CD4-positive, alpha-beta memory T cell (primary cell): ENCODE measurements at regions of chr15 and their contacts with region 1.

Region 1: DNA sequence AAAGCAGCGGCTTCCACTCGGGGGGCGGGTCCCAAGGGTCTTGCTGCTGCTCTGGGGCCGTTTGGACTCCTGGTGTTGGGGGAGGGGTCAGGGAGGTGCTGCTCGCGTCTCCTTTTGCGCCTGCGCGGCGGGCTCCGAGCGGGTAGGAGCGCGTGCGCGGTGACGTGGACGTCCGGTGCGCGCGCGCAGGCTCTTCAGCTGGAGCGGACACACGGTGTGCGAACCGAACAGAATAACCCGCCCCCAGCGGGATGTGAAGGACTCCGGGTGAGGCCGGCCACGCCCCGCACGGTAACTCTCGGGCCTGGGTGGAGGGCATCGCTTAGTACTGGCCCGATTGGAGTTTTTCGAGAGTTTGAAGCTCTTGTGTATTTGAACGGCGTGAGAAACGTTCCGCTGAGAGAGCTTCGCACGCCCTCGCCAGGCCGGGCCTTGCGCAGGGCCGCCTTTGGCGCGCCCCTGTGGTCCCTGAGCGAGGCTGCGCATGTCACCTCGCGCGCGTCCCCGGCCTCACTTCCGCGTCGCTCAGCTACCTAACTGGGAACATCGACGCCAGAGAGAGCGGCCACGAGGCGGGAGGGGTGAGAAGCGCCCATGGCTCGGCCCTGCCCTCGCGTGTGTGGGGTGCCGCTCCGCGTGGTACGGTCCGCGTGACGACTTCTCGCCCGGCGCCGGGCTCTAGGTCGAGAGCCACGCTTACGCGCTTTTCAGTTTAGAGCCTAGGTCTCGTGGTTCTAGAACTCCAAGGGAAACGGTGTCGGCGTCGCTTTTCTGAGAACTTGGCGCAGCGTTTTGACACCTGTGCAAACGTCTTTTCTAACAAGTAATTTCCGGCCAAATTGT is at the start of gene MGA:
- DNase-seq: peak; percentile 90 to 94 (median 92)
- H3K4me3 ChIP-seq: peak within 1 kb of the TSS; percentile 71 to 72
- H3K4me3 Mint-ChIP-seq: peak within 1 kb of the TSS; percentile 84 to 96 (median 94)
- H3K27ac ChIP-seq: peak within 1 kb of the TSS; percentile 67
- H3K27ac Mint-ChIP-seq: peak within 1 kb of the TSS; percentile 91 to 99 (median 97)
- H3K4me1 ChIP-seq: peaks cover 59% of the 10 kb centered on the region
- H3K4me1 Mint-ChIP-seq: peaks cover 30 to 65% (median 43%) of the 10 kb centered on the region in 4 donors
- H3K27me3 ChIP-seq: no peaks in the 10 kb centered on the region
- H3K27me3 Mint-ChIP-seq: peaks cover 0 to 1% of the 10 kb centered on the region in 2 donors
- total RNA-seq, gene MGA: 70.1 to 74.9 TPM

Region 2: DNA sequence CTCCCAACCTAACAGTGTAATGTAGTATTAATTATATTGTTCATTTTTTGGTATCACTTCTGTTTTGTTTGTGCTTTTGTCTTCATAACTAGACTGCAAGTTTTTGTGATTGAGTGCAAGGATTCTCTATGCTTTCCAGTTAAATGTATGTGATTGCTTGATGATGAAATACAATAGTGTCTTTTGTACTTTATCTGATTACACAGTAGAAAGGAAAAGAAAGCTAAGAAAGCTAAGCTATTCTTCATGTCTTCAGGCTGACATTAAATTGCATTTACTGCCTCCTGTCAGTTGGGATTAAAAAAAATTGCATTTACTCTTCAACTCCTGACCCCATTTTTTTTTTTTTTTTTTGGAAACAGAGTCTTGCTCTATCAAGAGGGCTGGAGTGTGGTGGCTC is 215.1 kb before region 1 on chr15:
- CTCF ChIA-PET with region 1: no interaction called
- POLR2A ChIA-PET with region 1: no interaction called
- intact Hi-C with region 1: no loop called
- DNase-seq: no peak
- H3K4me3 ChIP-seq: no peak overlapping the region
- H3K4me3 Mint-ChIP-seq: no peak overlapping the region
- H3K27ac ChIP-seq: no peak overlapping the region
- H3K27ac Mint-ChIP-seq: peak overlapping the region in 2 of 7 donors; percentile 22 to 61
- H3K4me1 ChIP-seq: peaks cover 13% of the 10 kb centered on the region
- H3K4me1 Mint-ChIP-seq: peaks cover 10 to 21% (median 16%) of the 10 kb centered on the region in 4 donors
- H3K27me3 ChIP-seq: no peaks in the 10 kb centered on the region
- H3K27me3 Mint-ChIP-seq: no peaks in the 10 kb centered on the region

Region 3: DNA sequence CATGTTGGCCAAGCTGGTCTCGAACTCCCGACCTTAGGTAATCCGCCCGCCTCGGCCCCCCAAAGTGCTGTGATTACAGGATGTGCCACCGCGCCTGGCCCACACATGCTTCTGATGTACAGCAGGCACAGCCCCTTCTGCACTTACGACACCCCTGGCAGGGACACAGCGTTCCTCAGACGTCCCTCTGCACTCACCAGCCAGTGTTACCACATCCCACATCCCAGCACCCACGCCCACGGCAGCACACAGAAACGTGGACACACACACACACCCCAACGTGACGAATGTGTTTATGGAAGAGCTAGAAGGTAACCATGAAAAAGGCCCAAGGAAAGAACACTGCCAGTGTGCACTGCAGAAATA is 115.8 kb before region 1 on chr15:
- CTCF ChIA-PET with region 1: no interaction called
- POLR2A ChIA-PET with region 1: interaction called, 11 read pairs
- intact Hi-C with region 1: loop called (anchors 1 kb)
- DNase-seq: peak in 2 of 5 donors; percentile 7 to 17
- H3K4me3 ChIP-seq: peak overlapping the region in 1 of 2 donors; percentile 86
- H3K4me3 Mint-ChIP-seq: peak overlapping the region; percentile 94 to 97 (median 95)
- H3K27ac ChIP-seq: no peak overlapping the region
- H3K27ac Mint-ChIP-seq: peak overlapping the region; percentile 88 to 98 (median 95)
- H3K4me1 ChIP-seq: peaks cover 12% of the 10 kb centered on the region
- H3K4me1 Mint-ChIP-seq: peaks cover 10 to 27% (median 17%) of the 10 kb centered on the region in 4 donors
- H3K27me3 ChIP-seq: no peaks in the 10 kb centered on the region
- H3K27me3 Mint-ChIP-seq: no peaks in the 10 kb centered on the region

Region 4: DNA sequence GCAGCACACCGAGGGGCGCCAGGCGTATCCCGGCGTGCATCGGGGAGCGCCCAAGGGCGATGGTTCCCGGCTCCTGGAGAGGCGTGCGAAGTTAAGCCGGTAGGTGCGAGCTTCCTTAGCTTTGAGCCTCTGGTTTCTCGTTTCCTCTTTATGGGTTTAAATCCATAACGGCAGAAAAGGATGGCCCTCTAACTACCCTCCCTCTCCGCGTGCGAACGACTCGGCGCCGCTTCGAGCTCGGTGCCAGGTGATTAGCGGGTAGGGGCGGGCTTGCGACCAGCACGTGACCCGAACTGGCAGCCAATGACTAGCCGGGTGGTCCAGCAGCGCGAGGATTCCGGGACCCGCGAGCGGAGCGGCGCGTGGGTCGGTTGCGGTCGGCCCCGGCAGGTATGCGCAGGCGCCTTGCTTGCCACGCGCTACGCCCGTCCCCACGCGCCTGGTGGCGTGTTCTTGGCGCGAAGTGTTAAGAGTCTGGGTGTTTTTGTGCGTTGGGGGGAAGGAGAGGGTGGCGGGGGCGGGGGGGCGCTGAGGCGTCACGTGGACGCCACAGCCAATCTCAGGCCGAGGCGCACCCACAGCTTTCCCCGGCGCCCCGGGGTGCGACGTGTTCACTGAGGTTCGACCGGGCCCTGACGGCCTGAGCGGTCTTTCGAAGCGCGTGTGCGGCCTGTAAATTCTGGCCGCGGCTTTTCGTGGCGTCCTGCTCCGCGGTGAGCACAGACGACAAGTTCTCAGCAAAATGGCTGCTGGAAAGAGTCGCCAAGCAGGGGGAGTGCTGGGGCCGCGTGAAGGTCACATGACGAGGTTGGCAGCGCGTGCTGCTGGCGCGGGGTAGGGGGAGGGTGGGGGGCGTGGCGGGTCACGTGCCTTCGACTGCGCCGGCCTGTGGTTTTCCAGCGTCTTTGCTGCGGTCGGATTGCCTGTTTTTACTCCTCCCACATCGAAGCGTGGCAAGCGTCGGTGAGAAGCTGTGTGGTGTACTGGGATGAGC is 39.0 kb before region 1 on chr15:
- CTCF ChIA-PET with region 1: interaction called, 3 read pairs
- POLR2A ChIA-PET with region 1: interaction called, 25 read pairs
- intact Hi-C with region 1: loop called (anchors 1 kb)
- DNase-seq: peak; percentile 77 to 83 (median 81)
- H3K4me3 ChIP-seq: peak overlapping the region; percentile 12 to 44
- H3K4me3 Mint-ChIP-seq: peak overlapping the region; percentile 67 to 84 (median 76)
- H3K27ac ChIP-seq: no peak overlapping the region
- H3K27ac Mint-ChIP-seq: peak overlapping the region; percentile 70 to 90 (median 81)
- H3K4me1 ChIP-seq: peaks cover 18% of the 10 kb centered on the region
- H3K4me1 Mint-ChIP-seq: peaks cover 3 to 21% (median 10%) of the 10 kb centered on the region in 4 donors
- H3K27me3 ChIP-seq: no peaks in the 10 kb centered on the region
- H3K27me3 Mint-ChIP-seq: no peaks in the 10 kb centered on the region

Region 5: GRCh38 chr15:41695750-41696426 is 35.4 kb after region 1 on chr15:
- CTCF ChIA-PET with region 1: interaction called, 7 read pairs
- POLR2A ChIA-PET with region 1: interaction called, 20 read pairs
- intact Hi-C with region 1: no loop called
- DNase-seq: peak; percentile 45 to 67 (median 52)
- H3K4me3 ChIP-seq: no peak overlapping the region
- H3K4me3 Mint-ChIP-seq: peak overlapping the region; percentile 2 to 73 (median 54)
- H3K27ac ChIP-seq: peak overlapping the region; percentile 11
- H3K27ac Mint-ChIP-seq: peak overlapping the region; percentile 6 to 92 (median 77)
- H3K4me1 ChIP-seq: peaks cover 23% of the 10 kb centered on the region
- H3K4me1 Mint-ChIP-seq: peaks cover 34 to 54% (median 44%) of the 10 kb centered on the region in 4 donors
- H3K27me3 ChIP-seq: no peaks in the 10 kb centered on the region
- H3K27me3 Mint-ChIP-seq: no peaks in the 10 kb centered on the region

Region 6: DNA sequence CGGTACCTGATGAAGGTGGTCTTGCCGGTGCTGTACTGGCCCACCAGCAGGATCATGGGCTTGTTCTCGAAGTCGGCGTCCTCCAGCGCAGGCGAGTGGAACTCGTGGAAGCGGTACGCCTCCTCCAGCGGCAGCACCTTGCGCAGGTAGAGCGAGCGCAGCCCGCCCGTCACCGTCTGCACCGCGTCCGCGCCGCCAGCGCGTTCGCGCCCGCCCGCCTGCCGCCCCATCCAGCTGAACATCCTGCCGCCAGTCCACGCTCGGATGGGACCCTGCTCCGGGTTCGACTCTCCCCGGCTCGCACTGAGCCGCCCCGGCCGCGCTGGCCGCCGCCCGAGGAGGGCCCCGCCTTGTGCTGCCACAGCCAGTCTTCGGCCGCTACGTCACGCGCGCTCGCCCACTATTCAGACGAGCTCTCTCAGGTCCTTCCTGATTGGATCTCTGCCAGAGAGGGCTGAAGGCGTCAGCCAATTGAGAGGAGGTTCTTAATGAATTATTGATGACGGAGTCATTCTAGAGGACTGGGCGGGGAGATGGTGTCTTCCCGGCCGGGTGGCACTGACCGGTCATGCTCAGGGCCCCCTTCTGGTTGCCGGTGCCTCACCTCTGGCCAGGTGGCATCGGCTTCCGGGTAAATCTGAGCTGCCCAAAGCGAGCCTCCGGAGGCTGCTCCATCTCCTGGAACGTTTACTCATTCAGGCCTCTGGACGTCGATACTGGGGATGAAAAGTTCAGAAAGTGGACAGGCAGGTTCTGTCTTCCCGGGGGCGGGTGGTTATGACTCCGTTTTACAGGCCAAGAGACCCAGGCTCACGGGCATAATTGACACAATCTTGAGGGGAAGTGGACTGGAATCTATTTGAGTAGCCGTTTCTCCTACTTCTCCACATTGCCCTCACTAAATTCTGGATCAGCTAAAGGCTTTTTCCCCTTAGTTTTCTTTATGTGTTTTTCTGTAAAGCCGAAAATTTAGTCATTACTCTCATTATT is 312.1 kb after region 1 on chr15 and contains the start of gene EHD4:
- CTCF ChIA-PET with region 1: no interaction called
- POLR2A ChIA-PET with region 1: interaction called, 5 read pairs
- intact Hi-C with region 1: loop called (anchors 5 kb)
- DNase-seq: peak; percentile 94 to 97 (median 95)
- H3K4me3 ChIP-seq: peak within 1 kb of the TSS; percentile 76 to 79
- H3K4me3 Mint-ChIP-seq: peak within 1 kb of the TSS; percentile 92 to 97 (median 94)
- H3K27ac ChIP-seq: peak within 1 kb of the TSS; percentile 87
- H3K27ac Mint-ChIP-seq: peak within 1 kb of the TSS; percentile 85 to 98 (median 97)
- H3K4me1 ChIP-seq: peaks cover 49% of the 10 kb centered on the region
- H3K4me1 Mint-ChIP-seq: peaks cover 31 to 53% (median 40%) of the 10 kb centered on the region in 4 donors
- H3K27me3 ChIP-seq: no peaks in the 10 kb centered on the region
- H3K27me3 Mint-ChIP-seq: peaks cover 5% of the 10 kb centered on the region in 2 donors
- total RNA-seq, gene EHD4: 15.2 to 15.6 TPM